ENCODE measurements at regions of chr19 and their contacts with region 1.

Region 1: DNA sequence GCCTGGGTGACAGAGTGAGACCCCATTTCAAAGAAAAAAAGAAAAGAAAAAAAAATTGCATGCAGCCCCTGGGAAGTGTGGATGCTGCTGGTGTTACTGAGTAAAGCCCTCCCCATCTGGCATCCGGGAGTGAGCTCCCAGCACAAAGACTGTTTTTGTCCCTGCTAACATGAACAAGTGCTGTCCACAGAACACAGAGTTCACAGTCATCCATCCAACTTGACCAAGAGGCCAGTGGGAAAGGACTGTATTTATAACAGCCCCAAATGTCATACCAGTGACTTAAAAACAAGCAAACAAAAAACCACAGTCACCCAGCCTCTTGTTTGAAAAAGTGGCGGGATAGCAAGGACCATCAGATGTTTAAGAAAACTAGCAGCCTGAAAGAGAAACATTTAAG is 10.8 kb downstream of the FBXO17 start:
- DNase-seq: no peak
- H3K4me3 ChIP-seq: no peak overlapping the region
- H3K27ac ChIP-seq: no peak overlapping the region
- H3K4me1 ChIP-seq: peaks cover 0 to 2% of the 10 kb centered on the region in 2 experiments; a peak in 1 of 4 replicates
- H3K27me3 ChIP-seq: no peaks in the 10 kb centered on the region
- CTCF ChIP-seq: no peak
- EP300 ChIP-seq: no peak
- RAD21 ChIP-seq: no peak

Region 2: DNA sequence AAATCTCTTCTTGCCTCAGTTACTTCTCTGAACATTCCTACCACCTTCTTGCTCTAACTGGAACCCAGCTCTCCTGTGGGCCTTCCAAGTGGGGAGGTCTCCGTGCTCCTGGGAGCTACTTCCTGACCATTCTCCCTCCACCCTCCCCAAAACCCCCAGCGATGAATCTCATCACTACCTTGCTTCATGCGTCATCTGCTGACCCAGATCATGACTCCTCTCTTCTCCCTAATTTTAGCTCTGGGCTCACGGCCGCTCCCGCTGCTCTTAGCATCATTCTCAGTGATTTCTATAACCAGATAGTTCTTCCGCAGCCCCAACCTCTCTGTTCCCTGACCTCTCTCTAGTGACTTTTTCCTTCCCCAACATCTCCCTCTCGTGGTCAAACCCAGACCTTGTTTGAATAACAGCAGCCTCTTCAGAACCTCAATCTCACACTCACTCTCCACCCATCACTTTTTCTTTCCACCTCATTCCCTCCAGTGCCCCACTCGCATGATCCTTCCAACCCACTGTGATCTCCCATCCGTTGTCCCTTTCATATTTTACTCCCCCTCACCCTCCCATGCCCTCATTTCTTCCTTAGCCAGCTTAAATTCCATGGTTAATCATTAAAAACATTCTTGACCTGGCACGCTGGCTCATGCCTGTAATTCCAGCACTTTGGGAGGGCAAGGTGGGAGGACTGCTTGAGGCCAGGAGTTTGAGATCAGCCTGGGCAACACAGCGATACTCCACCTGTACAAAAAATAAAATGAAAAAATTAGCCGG is 12.2 kb before region 1 on chr19:
- CTCF ChIA-PET with region 1: interaction called, 12 read pairs
- POLR2A ChIA-PET with region 1: no interaction called
- DNase-seq: no peak
- H3K4me3 ChIP-seq: no peak overlapping the region
- H3K27ac ChIP-seq: no peak overlapping the region
- H3K4me1 ChIP-seq: peaks cover 0 to 4% of the 10 kb centered on the region in 2 experiments; a peak in 1 of 4 replicates
- H3K27me3 ChIP-seq: no peaks in the 10 kb centered on the region
- CTCF ChIP-seq: no peak
- EP300 ChIP-seq: no peak
- RAD21 ChIP-seq: peak; percentile 47

Measured in SK-N-SH (cell line).